ENCODE measurements at regions of chr11 and their contacts with region 1.

Region 1: GRCh38 chr11:94623120-94623735 is 56.1 kb downstream of the PIWIL4 start:
- DNase-seq: peak; percentile 90
- H3K4me3 ChIP-seq: no peak overlapping the region
- H3K27ac ChIP-seq: no peak overlapping the region
- H3K4me1 ChIP-seq: no peaks in the 10 kb centered on the region
- H3K27me3 ChIP-seq: no peaks in the 10 kb centered on the region
- CTCF ChIP-seq: peak; percentile 90

Region 2: DNA sequence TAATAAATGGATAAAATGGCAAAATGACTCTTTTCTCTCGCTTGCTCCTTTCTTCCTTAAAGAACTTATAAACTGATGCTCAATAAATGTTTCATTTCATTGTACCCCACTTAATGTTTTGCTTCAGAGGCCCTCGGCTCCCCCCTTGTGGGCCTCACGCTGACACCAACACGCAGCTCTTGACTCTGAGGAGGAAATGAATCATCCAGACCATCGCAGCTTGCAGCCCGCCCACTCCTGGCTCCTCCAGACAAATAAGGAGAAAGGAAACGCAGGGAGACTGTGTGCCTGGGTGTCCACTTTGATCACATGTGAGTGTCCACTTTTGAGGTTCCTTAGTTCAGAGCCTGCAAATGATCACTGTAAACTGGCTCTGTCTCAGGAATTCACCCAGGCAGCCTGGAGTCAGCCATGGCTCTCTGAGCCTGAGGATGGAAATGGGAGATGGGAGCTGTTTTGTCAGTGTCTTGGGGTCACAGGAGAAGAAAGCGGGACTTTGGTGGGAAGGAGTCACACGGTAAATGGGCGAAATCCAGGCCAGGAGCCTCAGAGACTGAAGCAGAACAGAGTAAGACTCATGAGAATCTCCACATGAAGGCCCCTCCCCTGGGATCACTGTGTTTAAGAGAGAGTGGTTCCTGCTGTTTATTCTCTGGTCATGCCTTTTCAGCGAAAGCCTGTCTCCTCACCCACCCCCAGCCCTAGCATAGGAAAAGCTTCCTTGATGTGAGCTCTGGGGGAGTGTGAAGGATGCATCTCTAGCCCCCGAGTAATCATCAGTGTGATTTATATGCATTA is 253.6 kb after region 1 on chr11:
- CTCF ChIA-PET with region 1: interaction called, 3 read pairs
- POLR2A ChIA-PET with region 1: no interaction called
- intact Hi-C with region 1: loop called (anchors 1 kb)
- DNase-seq: peak; percentile 95
- H3K4me3 ChIP-seq: no peak overlapping the region
- H3K27ac ChIP-seq: peak overlapping the region; percentile 86
- H3K4me1 ChIP-seq: peaks cover 23% of the 10 kb centered on the region
- H3K27me3 ChIP-seq: no peaks in the 10 kb centered on the region
- CTCF ChIP-seq: peak; percentile 52

Region 3: DNA sequence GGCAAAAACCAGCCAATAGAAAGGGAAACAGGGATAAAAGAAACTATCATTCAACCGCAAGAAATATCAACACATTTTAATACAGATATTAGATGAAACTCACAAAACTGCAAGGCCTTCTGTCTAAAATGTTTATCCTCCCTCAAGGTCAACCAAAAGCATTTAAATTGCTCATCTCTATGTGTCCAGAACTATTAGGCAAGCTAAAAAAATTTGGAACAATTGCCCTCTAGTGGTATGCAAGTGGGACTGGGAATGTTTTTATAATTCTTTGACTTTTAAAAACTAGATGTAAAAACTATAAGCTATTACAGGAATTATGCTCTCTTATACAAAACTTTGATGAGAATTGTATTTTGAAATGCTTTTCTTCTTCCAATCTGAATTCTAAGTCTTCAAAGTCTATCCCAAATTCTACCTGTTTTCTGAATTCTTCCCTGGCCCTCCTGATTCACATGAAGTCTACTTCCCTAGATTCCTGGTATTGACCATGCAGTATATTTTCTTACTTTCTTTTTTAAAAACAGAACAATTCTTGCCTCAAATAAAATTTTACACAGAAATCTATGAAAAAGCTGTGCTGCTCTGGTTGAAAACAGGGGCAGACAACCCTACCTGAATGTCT is 345.2 kb after region 1 on chr11:
- CTCF ChIA-PET with region 1: interaction called, 11 read pairs
- POLR2A ChIA-PET with region 1: no interaction called
- intact Hi-C with region 1: loop called (anchors 1 kb)
- DNase-seq: peak; percentile 51
- H3K4me3 ChIP-seq: no peak overlapping the region
- H3K27ac ChIP-seq: no peak overlapping the region
- H3K4me1 ChIP-seq: peaks cover 10% of the 10 kb centered on the region
- H3K27me3 ChIP-seq: no peaks in the 10 kb centered on the region
- CTCF ChIP-seq: peak; percentile 77

Region 4: GRCh38 chr11:95138448-95138847 is 515.2 kb after region 1 on chr11:
- CTCF ChIA-PET with region 1: no interaction called
- POLR2A ChIA-PET with region 1: no interaction called
- intact Hi-C with region 1: loop called (anchors 5 kb)
- DNase-seq: peak; percentile 53
- H3K4me3 ChIP-seq: no peak overlapping the region
- H3K27ac ChIP-seq: no peak overlapping the region
- H3K4me1 ChIP-seq: no peaks in the 10 kb centered on the region
- H3K27me3 ChIP-seq: no peaks in the 10 kb centered on the region
- CTCF ChIP-seq: peak; percentile 63

Region 5: GRCh38 chr11:95764267-95764898 is 1141.2 kb after region 1 on chr11:
- CTCF ChIA-PET with region 1: no interaction called
- POLR2A ChIA-PET with region 1: no interaction called
- intact Hi-C with region 1: loop called (anchors 10 kb)
- DNase-seq: peak; percentile 77
- H3K4me3 ChIP-seq: no peak overlapping the region
- H3K27ac ChIP-seq: no peak overlapping the region
- H3K4me1 ChIP-seq: no peaks in the 10 kb centered on the region
- H3K27me3 ChIP-seq: no peaks in the 10 kb centered on the region
- CTCF ChIP-seq: peak; percentile 86

Measured in A673 (cell line).